ENCODE measurements at regions of chr7 and their contacts with region 1.

Region 1: GRCh38 chr7:54839538-54840213 is 80.7 kb upstream of the SEC61G start:
- DNase-seq: peak; percentile 10 to 59 (median 27)
- H3K4me3 ChIP-seq: no peak overlapping the region
- H3K4me3 Mint-ChIP-seq: no peak overlapping the region
- H3K27ac ChIP-seq: no peak overlapping the region
- H3K27ac Mint-ChIP-seq: no peak overlapping the region
- H3K4me1 ChIP-seq: peaks cover 0 to 2% of the 10 kb centered on the region in 2 donors
- H3K4me1 Mint-ChIP-seq: peaks cover 6% of the 10 kb centered on the region
- H3K27me3 ChIP-seq: peaks cover 0 to 2% of the 10 kb centered on the region in 2 donors
- H3K27me3 Mint-ChIP-seq: peaks cover 0 to 6% (median 1%) of the 10 kb centered on the region in 3 donors
- CTCF ChIP-seq: peak; percentile 63

Region 2: DNA sequence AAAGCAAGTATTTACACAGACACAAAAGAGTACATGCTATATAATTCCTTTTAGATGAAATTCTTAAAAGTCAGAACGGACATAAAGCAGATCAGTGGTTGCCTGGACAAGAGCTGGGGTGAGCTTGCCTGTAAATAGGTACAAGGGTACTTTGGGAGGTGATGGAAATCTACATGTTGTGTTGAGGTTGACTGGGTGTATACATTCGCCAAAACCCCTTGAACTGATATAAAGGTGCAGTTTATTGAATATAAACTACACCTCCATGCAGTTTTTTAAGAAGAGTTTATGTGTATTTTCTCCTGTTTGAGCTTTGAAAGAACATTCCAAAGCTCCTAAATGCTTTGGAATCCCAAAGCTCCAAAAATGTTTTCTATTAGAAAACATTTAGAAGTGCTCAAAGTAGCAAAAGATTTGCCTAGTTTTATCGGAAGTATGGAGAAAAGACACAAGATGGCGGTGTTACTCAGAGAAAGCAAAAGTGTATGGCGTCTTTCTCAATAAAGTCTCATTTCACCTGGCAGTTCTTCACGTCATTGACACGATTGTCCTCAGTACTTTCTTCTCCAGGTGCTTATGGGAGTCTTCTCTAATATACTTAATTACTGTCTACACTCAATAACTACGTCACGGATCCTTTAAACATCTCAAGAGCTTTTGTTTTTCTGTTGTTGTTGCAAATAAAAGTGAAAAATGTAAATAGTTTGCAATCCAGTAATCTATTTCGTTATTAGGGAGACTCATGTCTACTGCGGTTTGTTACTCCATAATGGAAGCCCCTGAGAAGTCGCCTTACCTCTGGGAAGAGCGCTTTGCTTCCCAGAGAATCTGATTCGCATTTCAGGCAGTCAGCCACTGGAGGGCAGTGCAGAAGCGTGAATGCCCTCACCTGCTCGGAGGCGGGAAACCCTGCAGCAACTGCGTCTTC is 65.9 kb before region 1 on chr7:
- intact Hi-C with region 1: loop called in 1 of 2 experiments (anchors 5 kb)
- DNase-seq: peak; percentile 25 to 57 (median 50)
- H3K4me3 ChIP-seq: peak overlapping the region in 2 of 3 experiments; percentile 1 to 36
- H3K4me3 Mint-ChIP-seq: peak overlapping the region; percentile 68 to 82
- H3K27ac ChIP-seq: no peak overlapping the region
- H3K27ac Mint-ChIP-seq: peak overlapping the region in 1 of 7 donors; percentile 27
- H3K4me1 ChIP-seq: no peaks in the 10 kb centered on the region
- H3K4me1 Mint-ChIP-seq: peaks cover 11% of the 10 kb centered on the region
- H3K27me3 ChIP-seq: peaks cover 6 to 10% of the 10 kb centered on the region in 2 donors
- H3K27me3 Mint-ChIP-seq: peaks cover 12 to 18% (median 16%) of the 10 kb centered on the region in 3 donors
- CTCF ChIP-seq: peak; percentile 87

Region 3: DNA sequence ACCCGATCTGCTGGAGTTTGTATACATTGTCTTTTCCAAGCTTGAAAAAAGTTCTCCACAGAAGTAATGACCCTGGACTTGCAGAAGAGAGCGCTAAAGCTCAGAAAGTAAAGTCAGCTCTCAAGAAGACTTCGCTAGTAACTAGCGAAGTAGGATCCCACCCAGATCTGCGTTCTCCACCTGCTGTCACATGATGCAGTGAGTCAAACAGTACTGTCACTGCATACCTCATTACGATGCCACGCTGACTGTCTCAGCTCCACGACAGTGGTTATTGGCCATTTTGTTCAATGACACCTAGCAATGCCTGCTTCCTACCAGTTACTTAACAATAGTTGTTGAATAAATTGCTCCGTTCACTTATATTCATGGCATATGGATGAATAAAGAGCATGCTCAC is 51.0 kb before region 1 on chr7:
- intact Hi-C with region 1: loop called (anchors 5 kb)
- DNase-seq: peak; percentile 10 to 61 (median 16)
- H3K4me3 ChIP-seq: no peak overlapping the region
- H3K4me3 Mint-ChIP-seq: no peak overlapping the region
- H3K27ac ChIP-seq: no peak overlapping the region
- H3K27ac Mint-ChIP-seq: no peak overlapping the region
- H3K4me1 ChIP-seq: no peaks in the 10 kb centered on the region
- H3K4me1 Mint-ChIP-seq: peaks cover 5% of the 10 kb centered on the region
- H3K27me3 ChIP-seq: peaks cover 0 to 2% of the 10 kb centered on the region in 2 donors
- H3K27me3 Mint-ChIP-seq: peaks cover 12 to 15% (median 12%) of the 10 kb centered on the region in 3 donors
- CTCF ChIP-seq: peak; percentile 37

Region 4: GRCh38 chr7:54904130-54904529 is 64.5 kb after region 1 on chr7:
- intact Hi-C with region 1: no loop called
- DNase-seq: no peak
- H3K4me3 ChIP-seq: no peak overlapping the region
- H3K4me3 Mint-ChIP-seq: no peak overlapping the region
- H3K27ac ChIP-seq: no peak overlapping the region
- H3K27ac Mint-ChIP-seq: no peak overlapping the region
- H3K4me1 ChIP-seq: no peaks in the 10 kb centered on the region
- H3K4me1 Mint-ChIP-seq: no peaks in the 10 kb centered on the region
- H3K27me3 ChIP-seq: no peaks in the 10 kb centered on the region
- H3K27me3 Mint-ChIP-seq: no peaks in the 10 kb centered on the region
- CTCF ChIP-seq: no peak